Head of caudate nucleus (tissue), 42 donors: ENCODE measurements at regions of chr2 and their contacts with region 1.

Region 1: GRCh38 chr2:218395797-218396687 is 3.6 kb upstream of the CTDSP1 start:
- DNase-seq: peak; percentile 83 to 98 (median 95)

Region 2: DNA sequence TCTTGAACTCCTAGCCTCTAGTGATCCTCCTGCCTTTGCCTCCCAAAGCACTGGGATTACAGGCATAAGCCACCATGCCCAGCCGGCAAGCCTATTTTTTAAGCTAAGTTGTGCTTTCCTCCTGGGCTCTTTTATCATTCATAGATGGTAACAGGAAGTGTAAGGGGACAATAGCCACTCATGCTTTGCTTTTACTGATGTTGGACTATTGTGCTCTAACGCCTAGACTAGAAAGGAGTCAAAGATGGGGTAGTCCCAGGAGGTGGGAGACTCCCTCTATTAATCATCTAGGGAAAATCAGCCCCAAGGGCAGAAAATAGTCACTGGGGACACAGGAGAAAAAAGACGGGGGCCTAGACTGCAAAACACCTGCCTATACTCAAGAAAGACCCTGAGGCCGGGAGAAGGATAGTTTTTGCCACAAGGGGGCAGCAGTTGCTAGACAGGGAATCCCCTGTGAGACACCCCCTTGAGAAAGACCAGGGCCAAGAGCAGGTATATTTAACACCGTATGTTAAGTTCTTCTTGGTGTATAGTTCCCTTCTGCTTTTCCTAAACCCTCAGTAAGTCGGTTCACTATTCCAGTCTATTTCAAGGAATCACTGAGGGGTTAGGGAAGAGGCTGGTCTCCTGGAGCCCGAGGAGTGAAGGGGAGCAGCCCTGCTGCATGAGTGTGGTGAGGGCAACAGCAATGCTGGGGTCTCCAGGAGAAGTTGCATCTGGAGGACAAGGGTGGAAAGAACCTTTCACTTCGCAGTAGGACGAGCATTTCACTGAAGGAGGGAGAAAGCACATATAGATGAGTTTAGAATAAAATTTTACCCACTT is 227.2 kb before region 1 on chr2:
- intact Hi-C with region 1: no loop called
- DNase-seq: peak in 40 of 42 donors; percentile 9 to 80 (median 48)

Region 3: DNA sequence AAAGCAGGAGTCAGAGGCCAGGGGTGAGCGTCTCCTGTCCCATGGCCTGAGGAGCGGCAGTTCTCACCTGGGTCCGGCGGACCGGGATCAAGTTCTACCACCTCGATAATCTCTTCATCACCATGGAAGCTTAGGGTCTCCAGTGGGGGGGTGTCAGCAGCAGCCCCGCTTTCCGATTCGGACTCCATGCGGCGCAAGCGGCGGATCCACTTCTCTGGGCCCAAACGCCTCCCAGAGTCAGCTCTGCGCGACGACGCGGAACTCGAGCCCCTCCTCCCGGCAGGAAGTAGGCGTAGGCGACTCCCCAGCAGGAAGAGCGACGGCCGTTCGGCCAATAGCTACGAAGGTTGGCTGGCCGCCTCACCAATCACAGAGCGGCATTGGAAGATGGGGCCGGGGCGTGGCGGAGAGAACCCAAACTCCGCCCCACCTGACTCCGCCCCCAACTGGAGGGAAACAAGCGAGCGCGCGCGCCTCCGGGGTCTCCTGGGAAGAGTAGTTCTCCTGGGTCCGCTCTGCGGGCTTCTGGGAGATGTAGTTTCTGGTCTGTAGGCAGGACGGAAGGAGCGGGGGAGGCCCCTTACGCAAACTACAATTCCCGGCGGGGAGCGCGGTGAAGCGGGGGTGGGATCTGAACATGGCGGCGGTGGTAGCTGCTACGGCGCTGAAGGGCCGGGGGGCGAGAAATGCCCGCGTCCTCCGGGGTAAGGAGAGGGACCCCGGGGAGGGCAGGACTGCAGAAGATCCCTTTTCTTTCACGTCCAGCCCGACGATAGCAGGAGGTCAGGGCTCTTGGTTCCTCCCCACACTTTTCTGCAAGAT is 125.9 kb before region 1 on chr2 and contains the starts of genes AAMP and PNKD:
- intact Hi-C with region 1: loop called (anchors 5 kb)
- DNase-seq: peak; percentile 99 to 100 (median 100)

Region 4: DNA sequence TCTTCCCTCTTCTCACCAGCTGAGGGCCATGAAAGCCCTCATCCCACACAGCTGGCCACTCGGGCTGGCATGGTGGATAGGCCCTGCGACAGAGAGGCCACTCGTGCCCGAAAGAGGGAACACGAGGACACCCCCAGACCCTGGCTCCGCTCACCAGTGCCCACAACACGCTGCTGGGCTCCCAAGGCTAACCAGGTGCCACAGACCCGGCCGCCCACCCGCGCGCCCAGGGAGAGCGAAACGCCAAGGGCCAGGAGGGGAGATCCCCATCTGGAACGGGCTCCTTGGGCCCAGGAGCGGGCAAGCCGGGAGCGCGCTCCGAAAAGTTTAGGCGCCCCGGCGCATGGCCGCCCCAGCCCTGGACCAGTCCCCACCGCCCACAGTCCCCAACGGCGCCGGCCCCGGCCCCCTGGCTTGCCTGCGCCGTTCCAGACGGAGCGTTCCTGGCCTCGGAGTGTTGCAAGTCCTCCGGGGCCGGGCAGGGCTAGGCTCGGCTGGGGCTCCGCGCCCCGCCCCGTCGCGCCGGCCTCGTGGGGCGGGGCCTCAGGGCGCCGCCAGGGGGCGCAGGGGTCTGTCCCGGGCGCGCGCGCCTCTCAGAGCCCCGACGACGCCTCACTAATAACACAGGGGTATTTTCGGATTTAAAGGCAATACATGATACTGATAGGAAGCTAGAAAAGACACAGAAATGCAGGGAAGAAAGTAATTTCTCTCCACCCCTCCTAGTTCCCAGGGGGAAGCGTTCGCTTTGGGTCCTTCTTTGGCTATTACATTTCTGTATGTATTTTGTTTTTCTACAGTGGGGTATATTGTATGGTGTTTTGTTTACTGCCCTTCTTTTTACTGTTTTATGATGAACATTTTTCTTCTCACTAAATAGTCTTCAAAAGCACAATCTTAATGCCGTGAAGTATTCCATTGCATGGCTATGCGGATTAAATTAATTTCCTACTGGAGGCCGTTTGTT is 103.7 kb before region 1 on chr2 and contains the start of gene TMBIM1:
- intact Hi-C with region 1: loop called (anchors 5 kb)
- DNase-seq: peak in 41 of 42 donors; percentile 39 to 86 (median 73)

Region 5: GRCh38 chr2:218301176-218301819 is 94.7 kb before region 1 on chr2:
- intact Hi-C with region 1: loop called (anchors 5 kb)
- DNase-seq: peak; percentile 47 to 95 (median 85)

Region 6: DNA sequence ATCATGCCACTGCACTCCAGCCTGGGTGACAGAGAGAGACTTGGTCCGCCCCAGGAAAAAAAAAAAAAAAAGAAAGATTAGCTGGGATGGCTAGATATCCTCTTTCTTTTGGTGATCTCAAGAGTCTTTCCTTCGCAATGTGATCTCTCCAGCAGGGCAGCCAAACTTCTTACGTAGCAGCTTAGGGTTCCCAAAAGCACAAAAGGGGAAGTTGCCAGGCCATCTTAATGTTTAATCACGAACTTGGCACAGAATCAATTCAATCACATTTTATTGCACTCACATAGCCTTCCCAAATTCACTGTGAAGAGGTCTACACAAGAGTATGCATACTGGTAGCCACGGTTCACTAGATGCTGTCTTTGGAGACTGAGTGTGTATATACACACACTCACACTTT is 75.9 kb after region 1 on chr2:
- intact Hi-C with region 1: no loop called
- DNase-seq: no peak

Region 7: DNA sequence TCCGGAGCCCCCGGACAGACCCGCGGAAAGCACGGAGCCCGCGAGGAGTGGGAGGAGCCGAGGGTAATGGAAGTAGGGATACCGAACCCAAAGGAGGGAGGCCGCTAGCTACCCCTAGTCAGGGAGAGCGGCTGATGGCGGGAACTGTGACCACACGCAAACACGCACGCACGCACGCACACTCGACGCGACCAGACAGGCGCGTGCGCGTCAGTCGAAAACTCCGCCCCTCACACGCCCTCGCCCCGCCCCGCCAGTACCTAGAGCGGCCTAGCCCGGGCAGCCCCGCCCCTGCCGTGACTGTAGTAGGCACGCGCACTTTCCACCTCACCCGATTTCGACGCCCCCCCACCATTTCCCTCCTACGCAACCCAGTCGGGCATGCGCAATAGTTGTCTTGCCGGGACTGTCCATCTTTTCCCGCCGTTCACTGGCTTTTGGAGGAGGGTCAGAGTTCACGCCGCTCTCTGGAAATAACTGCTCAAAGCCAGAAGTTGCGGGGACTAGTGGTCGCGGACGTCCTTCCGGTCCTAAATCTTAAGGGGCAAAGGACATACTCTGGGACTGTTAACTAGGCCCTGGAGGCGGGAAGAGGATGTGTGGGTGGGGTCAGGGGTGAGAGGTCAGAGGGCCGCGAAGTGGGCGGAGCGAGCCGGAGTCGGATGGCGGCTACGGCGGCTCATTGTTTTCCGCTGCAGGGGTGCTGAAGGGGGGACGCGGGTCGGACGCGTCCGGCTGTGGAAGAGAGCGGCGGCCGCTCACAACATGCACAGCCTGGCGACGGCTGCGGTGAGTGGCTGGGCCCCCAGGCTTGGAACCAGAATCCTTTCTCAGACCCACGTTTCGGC is 172.4 kb after region 1 on chr2 and contains the starts of genes CNOT9 and USP37:
- intact Hi-C with region 1: loop called (anchors 5 kb)
- DNase-seq: peak; percentile 97 to 100 (median 99)

Region 8: DNA sequence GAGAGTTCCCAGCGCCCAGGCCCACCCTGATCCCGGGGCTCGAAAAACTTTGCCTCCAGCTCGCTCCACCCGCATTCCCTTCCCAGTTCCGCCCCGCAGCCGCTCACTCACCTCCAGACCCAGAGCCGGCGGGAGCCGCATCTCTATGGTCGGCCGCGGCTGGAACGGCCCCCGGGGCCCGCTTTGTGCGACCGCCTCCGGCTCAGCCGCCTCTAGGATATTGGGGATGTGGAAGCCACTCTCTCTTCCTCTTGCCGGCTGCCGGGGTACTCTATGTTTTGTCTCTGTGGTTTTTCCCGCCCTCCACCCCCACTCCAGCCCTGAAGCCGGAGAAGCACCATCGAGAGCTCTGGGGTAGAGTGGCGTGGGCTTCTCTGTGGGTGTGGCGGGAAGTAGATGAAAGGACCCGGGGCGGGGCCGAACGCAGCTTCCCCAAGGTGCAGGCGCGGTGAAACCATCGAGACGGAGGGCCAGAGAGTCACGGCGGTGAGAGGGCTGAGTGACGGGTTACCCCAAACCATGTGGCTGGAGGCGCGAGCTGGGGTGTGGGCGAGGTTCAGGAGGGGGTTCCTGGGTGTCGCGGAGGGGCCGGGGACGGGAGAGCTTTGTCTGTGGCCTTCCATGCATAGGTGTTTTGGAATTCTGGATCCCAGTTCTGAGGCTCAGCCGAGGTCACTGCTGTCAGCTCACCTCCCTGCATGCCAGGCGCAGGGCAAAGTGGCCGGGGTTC is 263.4 kb after region 1 on chr2 and contains the starts of genes BCS1L and ZNF142:
- intact Hi-C with region 1: loop called (anchors 5 kb)
- DNase-seq: peak; percentile 90 to 98 (median 95)